Panc1 (cell line): ENCODE measurements at regions of chr16 and their contacts with region 1.

Region 1: GRCh38 chr16:67017810-67018488 is 11.0 kb upstream of the CBFB start:
- DNase-seq: peak; percentile 80
- ATAC-seq: peak; percentile 81
- H3K4me3 ChIP-seq: no peak overlapping the region
- H3K27ac ChIP-seq: no peak overlapping the region
- H3K4me1 ChIP-seq: peaks cover 3% of the 10 kb centered on the region; the same call in 1 of the 2 replicates
- H3K27me3 ChIP-seq: no peaks in the 10 kb centered on the region
- CTCF ChIP-seq: peak; percentile 83

Region 2: GRCh38 chr16:66977341-66978113 is 40.4 kb before region 1 on chr16:
- CTCF ChIA-PET with region 1: no interaction called
- POLR2A ChIA-PET with region 1: no interaction called
- in situ Hi-C with region 1: no loop called
- intact Hi-C with region 1: loop called (anchors 2 kb)
- DNase-seq: peak; percentile 51
- ATAC-seq: peak; percentile 98
- H3K4me3 ChIP-seq: no peak overlapping the region
- H3K27ac ChIP-seq: no peak overlapping the region
- H3K4me1 ChIP-seq: no peaks in the 10 kb centered on the region
- H3K27me3 ChIP-seq: no peaks in the 10 kb centered on the region
- CTCF ChIP-seq: peak; percentile 91

Region 3: DNA sequence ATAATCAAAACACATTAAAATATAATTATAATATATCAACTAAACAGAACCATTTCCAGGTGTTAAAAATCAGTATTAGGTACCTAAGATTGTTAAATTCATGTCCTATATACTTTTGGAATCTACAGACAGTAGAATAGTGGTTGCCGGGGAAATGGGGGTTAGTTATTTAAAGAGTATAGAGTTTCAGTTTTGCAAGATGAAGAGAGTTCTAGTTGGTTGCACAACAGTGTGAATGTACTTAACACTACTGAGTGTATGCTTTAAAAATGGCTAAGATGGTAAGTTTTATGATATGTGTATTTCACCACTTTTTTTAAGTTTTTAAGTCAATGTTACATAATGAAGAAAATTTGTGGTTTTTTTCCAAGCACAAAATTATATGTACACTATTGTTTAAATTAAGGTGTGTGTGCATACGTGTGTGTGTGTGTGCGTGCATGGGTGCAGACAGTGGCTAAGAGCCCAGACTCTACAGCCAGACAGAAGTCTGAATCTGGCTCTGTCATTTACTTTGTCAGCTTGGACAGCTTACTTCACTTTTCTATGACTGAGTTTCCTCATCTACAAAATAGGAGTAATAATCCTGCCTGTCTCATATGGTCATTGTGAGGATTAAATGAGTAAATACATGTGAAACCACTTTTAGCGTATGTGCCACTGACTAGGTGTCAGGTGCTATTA is 66.5 kb after region 1 on chr16:
- CTCF ChIA-PET with region 1: interaction called, 10 read pairs
- POLR2A ChIA-PET with region 1: no interaction called
- in situ Hi-C with region 1: no loop called
- intact Hi-C with region 1: no loop called
- DNase-seq: no peak
- ATAC-seq: no peak
- H3K4me3 ChIP-seq: no peak overlapping the region
- H3K27ac ChIP-seq: no peak overlapping the region
- H3K4me1 ChIP-seq: no peaks in the 10 kb centered on the region
- H3K27me3 ChIP-seq: no peaks in the 10 kb centered on the region
- CTCF ChIP-seq: no peak

Region 4: GRCh38 chr16:67109407-67110135 is 91.6 kb after region 1 on chr16 and contains the start of gene PHAF1:
- CTCF ChIA-PET with region 1: no interaction called
- POLR2A ChIA-PET with region 1: no interaction called
- in situ Hi-C with region 1: no loop called
- intact Hi-C with region 1: loop called (anchors 5 kb)
- DNase-seq: no peak
- ATAC-seq: peak; percentile 93
- H3K4me3 ChIP-seq: peak within 1 kb of the TSS; percentile 82 to 91
- H3K27ac ChIP-seq: peak within 1 kb of the TSS; percentile 90
- H3K4me1 ChIP-seq: peaks cover 9% of the 10 kb centered on the region
- H3K27me3 ChIP-seq: no peaks in the 10 kb centered on the region
- CTCF ChIP-seq: no peak
- total RNA-seq, gene PHAF1: 15.7 TPM

Region 5: GRCh38 chr16:67159593-67160406 is 141.9 kb after region 1 on chr16 and contains the starts of genes FBXL8 and TRADD:
- CTCF ChIA-PET with region 1: interaction called, 5 read pairs
- POLR2A ChIA-PET with region 1: no interaction called
- in situ Hi-C with region 1: no loop called
- intact Hi-C with region 1: loop called (anchors 10 kb)
- DNase-seq: peak; percentile 30
- ATAC-seq: peak; percentile 86
- H3K4me3 ChIP-seq: peak within 1 kb of the TSS; percentile 71 to 80
- H3K27ac ChIP-seq: peak within 1 kb of the TSS; percentile 74
- H3K4me1 ChIP-seq: peaks cover 3% of the 10 kb centered on the region; the same call in 1 of the 2 replicates
- H3K27me3 ChIP-seq: no peaks in the 10 kb centered on the region
- CTCF ChIP-seq: peak; percentile 79
- total RNA-seq, gene FBXL8: 17.8 TPM
- total RNA-seq, gene TRADD: 18.5 TPM